GM13977 (cell line): ENCODE measurements at regions of chr2 and their contacts with region 1.

Region 1: DNA sequence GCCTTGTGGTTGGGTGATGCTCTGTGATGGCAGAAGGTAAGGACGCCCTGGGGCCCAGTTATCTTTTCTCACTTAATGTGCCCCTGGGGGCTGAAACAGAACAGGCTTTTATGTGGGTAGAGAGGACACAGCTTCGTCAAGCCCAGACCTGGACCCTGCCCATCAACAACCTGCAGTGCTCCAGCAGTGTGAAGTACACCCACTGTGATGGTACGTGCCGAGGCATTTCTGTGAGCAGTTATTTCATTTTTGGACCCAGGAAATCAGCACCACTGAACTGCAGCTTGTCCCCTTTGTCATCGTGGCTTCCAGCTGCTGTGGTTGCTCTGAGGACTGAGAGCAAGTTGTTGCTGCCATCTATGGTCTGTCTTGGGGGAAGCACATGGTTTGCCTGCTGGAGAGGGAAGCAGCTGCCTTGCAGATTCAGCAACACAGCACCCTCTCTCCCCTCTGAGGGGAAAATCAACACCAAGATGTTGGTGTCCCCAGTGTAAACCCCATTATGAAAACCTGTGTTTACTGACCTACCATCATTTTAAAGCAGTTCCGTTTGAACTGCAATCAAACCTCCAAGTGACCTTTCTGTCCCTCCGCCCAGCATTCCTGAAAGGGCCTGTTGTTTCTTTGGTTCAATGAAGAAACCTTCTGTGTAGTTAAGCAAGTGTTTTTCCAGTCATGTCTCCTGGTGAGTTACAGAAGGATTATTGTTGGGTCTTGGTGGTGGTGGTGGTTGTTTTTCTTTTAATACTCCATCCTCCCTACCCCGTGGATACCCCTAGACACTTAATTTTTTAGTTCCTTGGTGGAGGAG is 158.2 kb downstream of the MGAT5 start:
- DNase-seq: peak; percentile 74
- CTCF ChIP-seq: peak; percentile 87

Region 2: GRCh38 chr2:133953524-133953923 is 458.5 kb before region 1 on chr2:
- in situ Hi-C with region 1: loop called (anchors 25 kb)
- DNase-seq: no peak
- CTCF ChIP-seq: no peak

Region 3: GRCh38 chr2:134118279-134119116 is 293.5 kb before region 1 on chr2:
- in situ Hi-C with region 1: loop called (anchors 10 kb)
- DNase-seq: peak; percentile 86
- CTCF ChIP-seq: peak; percentile 77

Region 4: GRCh38 chr2:134245340-134245984 is 166.6 kb before region 1 on chr2:
- in situ Hi-C with region 1: loop called (anchors 25 kb)
- DNase-seq: peak; percentile 33
- CTCF ChIP-seq: peak; percentile 79